ENCODE measurements at regions of chr9 and their contacts with region 1.

Region 1: DNA sequence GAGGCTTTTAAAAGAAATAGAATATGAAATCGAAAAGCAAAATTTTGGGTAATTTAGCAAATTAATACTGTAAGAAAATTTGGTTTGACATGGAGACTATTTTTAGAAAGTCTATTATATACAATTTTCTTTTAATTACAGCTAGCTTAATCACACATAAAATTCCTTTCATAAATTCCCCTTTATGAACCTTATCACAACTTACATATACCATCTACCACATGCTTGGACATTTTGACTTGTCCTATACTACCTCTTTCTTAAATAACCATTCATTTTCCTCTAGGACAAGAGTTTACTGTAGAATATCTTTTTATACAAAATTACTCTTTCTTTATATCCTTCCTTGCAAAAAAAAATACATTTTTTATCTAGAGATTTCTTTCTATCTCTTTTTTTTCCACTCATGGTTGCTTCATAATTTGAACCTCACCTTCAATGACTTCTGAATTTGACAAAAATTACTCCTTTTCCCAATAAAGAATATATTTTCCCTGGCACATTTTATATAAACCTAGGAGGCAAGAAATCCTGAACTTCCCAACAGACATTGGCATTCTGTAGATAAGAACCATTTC is 34.0 kb upstream of the SYK start:
- DNase-seq: no peak
- H3K4me3 ChIP-seq: no peak overlapping the region
- H3K27ac ChIP-seq: no peak overlapping the region
- H3K4me1 ChIP-seq: no peaks in the 10 kb centered on the region
- H3K27me3 ChIP-seq: no peaks in the 10 kb centered on the region
- CTCF ChIP-seq: no peak

Region 2: GRCh38 chr9:90855208-90855990 is 87.8 kb after region 1 on chr9:
- CTCF ChIA-PET with region 1: no interaction called
- POLR2A ChIA-PET with region 1: no interaction called
- intact Hi-C with region 1: no loop called
- DNase-seq: no peak
- H3K4me3 ChIP-seq: no peak overlapping the region
- H3K27ac ChIP-seq: no peak overlapping the region
- H3K4me1 ChIP-seq: no peaks in the 10 kb centered on the region
- H3K27me3 ChIP-seq: no peaks in the 10 kb centered on the region
- CTCF ChIP-seq: no peak

Region 3: DNA sequence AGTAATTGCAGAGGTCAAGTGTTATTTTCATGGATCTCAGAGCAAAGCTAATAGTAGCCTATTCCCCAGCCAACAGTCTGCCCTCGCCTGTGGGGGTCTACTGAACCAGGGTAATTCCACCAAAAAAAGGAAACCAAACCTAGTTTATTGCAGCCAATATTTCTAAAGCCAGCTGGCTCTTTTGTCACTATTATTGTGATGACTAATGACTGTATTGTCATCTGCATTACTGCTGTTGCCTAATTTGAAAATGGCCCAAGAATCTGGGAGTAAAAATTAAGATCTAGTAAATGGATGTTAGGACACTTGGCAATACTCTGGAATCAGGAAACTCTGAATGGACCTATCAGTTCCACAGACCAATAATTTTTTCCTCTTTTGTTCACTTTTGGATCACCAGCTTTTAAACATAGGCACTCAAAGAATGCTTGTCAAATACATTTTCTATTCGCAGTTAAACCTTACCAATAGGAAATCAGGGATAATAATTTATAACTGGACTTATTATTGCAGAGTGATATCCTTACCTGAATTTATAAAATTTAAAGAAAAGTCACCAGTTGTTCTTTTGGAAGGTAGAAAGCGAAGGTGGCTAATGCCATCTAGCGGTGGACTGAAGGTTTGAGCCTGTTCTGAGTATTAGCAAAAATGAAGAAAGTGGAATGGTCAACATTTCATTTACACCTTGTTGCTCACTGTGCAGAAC is 103.2 kb after region 1 on chr9:
- CTCF ChIA-PET with region 1: no interaction called
- POLR2A ChIA-PET with region 1: no interaction called
- intact Hi-C with region 1: loop called (anchors 5 kb)
- DNase-seq: peak; percentile 59
- H3K4me3 ChIP-seq: no peak overlapping the region
- H3K27ac ChIP-seq: no peak overlapping the region
- H3K4me1 ChIP-seq: peaks cover 5% of the 10 kb centered on the region
- H3K27me3 ChIP-seq: no peaks in the 10 kb centered on the region
- CTCF ChIP-seq: peak; percentile 89